ENCODE measurements at regions of chr20 and their contacts with region 1.

Region 1: GRCh38 chr20:64111841-64112641 is 4.7 kb upstream of the NPBWR2 start:
- DNase-seq: peak; percentile 37
- ATAC-seq: no peak

Region 2: GRCh38 chr20:62466806-62467537 is 1645.1 kb before region 1 on chr20:
- intact Hi-C with region 1: loop called (anchors 5 kb)
- DNase-seq: no peak
- ATAC-seq: no peak

Region 3: GRCh38 chr20:64079273-64080012 is 32.6 kb before region 1 on chr20 and contains the start of gene RGS19:
- intact Hi-C with region 1: no loop called
- DNase-seq: peak; percentile 86
- ATAC-seq: peak; percentile 59
- total RNA-seq, gene RGS19: 10.8 TPM